ENCODE measurements at regions of chr4 and their contacts with region 1.

Region 1: GRCh38 chr4:142846729-142847596 is 862 bp upstream of the INPP4B start:
- DNase-seq: no peak
- ATAC-seq: peak; percentile 57
- H3K4me3 Mint-ChIP-seq: peak overlapping the region; percentile 76
- H3K27ac Mint-ChIP-seq: no peak overlapping the region
- H3K4me1 Mint-ChIP-seq: peaks cover 16% of the 10 kb centered on the region
- H3K27me3 Mint-ChIP-seq: peaks cover 42% of the 10 kb centered on the region
- CTCF ChIP-seq: no peak

Region 2: DNA sequence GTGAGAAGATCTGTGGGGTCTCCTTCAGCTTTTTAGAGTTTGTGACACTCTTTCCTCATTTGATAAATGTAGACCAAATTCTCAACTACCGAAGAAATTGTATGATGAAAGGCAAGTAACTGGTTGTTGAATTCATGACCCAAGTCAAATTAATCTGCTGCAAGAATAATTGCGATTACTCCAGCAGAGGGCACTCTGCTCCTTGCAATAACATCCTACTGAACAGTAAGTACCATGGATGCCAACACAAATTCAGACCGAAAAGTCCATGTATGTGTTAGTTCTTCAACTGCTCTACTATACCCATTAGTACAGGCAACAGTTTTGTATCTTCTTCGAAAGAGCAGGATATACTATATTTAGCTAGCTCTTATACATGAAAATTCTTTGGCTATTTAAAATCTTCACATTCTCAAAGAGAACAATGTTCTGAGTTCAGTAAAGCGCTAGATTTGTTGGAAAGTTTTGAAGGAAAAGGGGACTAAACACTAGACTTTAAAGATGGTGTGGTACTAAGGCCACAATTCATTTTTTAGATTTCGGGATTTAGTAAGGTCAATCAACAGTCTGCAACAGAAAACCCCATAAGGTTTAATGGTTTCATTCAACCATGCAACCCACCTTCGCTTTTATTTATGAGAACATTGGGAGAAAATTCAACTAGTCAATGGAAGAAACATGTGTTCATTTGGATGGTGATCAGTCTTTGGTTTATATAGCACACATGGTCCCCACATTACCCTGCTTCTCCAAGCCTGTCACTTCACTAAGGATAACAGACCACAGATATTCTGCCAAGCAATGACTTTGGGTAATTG is 1985.4 kb before region 1 on chr4:
- CTCF ChIA-PET with region 1: no interaction called
- POLR2A ChIA-PET with region 1: no interaction called
- intact Hi-C with region 1: loop called (anchors 5 kb)
- DNase-seq: no peak
- ATAC-seq: peak; percentile 67
- H3K4me3 Mint-ChIP-seq: no peak overlapping the region
- H3K27ac Mint-ChIP-seq: no peak overlapping the region
- H3K4me1 Mint-ChIP-seq: peaks cover 14% of the 10 kb centered on the region
- H3K27me3 Mint-ChIP-seq: peaks cover 2% of the 10 kb centered on the region
- CTCF ChIP-seq: no peak

Region 3: DNA sequence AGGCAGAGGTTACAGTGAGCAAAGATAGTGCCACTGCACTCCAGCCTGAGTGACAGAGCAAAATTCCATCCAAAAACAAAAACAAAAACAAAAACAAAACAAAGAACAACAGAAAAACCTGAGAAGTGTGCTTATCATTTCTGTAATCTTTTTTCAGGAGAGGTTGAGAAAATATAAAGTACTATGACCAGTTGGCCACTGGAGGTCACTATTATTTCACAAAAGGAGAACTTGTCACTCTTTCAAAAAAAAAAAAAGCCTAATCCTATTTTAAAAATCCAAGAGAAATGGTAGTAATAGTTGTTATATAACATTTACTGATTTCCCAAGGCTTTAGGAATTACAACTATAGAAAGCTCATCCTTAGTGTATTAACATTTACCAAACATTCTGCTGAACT is 1688.7 kb before region 1 on chr4:
- CTCF ChIA-PET with region 1: no interaction called
- POLR2A ChIA-PET with region 1: no interaction called
- intact Hi-C with region 1: loop called (anchors 2 kb)
- DNase-seq: no peak
- ATAC-seq: no peak
- H3K4me3 Mint-ChIP-seq: no peak overlapping the region
- H3K27ac Mint-ChIP-seq: no peak overlapping the region
- H3K4me1 Mint-ChIP-seq: no peaks in the 10 kb centered on the region
- H3K27me3 Mint-ChIP-seq: peaks cover 13% of the 10 kb centered on the region
- CTCF ChIP-seq: no peak

Region 4: GRCh38 chr4:141307241-141307689 is 1539.7 kb before region 1 on chr4:
- CTCF ChIA-PET with region 1: no interaction called
- POLR2A ChIA-PET with region 1: no interaction called
- intact Hi-C with region 1: loop called (anchors 1 kb)
- DNase-seq: peak; percentile 21
- ATAC-seq: peak; percentile 81
- H3K4me3 Mint-ChIP-seq: no peak overlapping the region
- H3K27ac Mint-ChIP-seq: no peak overlapping the region
- H3K4me1 Mint-ChIP-seq: peaks cover 10% of the 10 kb centered on the region
- H3K27me3 Mint-ChIP-seq: peaks cover 5% of the 10 kb centered on the region
- CTCF ChIP-seq: peak; percentile 30

Region 5: DNA sequence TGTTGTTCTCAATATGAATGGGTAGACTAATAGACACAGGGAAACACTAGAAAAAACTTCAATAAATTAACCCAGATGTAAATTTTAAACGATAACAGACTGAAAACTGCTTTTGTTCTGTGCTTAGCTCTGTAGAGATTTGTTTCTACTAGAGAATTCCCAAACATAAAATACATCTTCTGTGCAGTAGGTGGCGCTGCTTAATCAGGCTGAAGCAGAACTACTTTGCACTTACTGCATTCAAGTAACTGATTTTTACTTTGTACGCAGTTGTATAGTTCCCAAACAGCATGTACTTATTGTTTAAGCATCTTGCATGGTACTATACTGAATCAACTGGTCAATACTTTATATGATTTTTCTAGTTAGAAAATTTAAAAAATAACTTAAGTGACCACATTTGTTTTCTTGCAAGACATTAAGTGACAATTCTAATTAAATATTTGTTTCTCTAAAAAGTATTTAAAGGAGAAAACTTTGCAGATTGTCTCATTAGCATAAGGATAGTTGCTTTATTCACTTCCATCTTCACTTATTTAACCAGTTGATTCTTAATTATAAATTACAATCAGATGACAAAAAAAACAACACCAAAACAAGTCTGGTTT is 720.0 kb before region 1 on chr4:
- CTCF ChIA-PET with region 1: interaction called, 3 read pairs
- POLR2A ChIA-PET with region 1: no interaction called
- intact Hi-C with region 1: loop called (anchors 1 kb)
- DNase-seq: no peak
- ATAC-seq: no peak
- H3K4me3 Mint-ChIP-seq: no peak overlapping the region
- H3K27ac Mint-ChIP-seq: no peak overlapping the region
- H3K4me1 Mint-ChIP-seq: no peaks in the 10 kb centered on the region
- H3K27me3 Mint-ChIP-seq: no peaks in the 10 kb centered on the region
- CTCF ChIP-seq: no peak

Region 6: GRCh38 chr4:142282870-142283431 is 564.0 kb before region 1 on chr4:
- CTCF ChIA-PET with region 1: no interaction called
- POLR2A ChIA-PET with region 1: no interaction called
- intact Hi-C with region 1: loop called (anchors 2 kb)
- DNase-seq: no peak
- ATAC-seq: no peak
- H3K4me3 Mint-ChIP-seq: no peak overlapping the region
- H3K27ac Mint-ChIP-seq: no peak overlapping the region
- H3K4me1 Mint-ChIP-seq: no peaks in the 10 kb centered on the region
- H3K27me3 Mint-ChIP-seq: no peaks in the 10 kb centered on the region
- CTCF ChIP-seq: no peak

Region 7: DNA sequence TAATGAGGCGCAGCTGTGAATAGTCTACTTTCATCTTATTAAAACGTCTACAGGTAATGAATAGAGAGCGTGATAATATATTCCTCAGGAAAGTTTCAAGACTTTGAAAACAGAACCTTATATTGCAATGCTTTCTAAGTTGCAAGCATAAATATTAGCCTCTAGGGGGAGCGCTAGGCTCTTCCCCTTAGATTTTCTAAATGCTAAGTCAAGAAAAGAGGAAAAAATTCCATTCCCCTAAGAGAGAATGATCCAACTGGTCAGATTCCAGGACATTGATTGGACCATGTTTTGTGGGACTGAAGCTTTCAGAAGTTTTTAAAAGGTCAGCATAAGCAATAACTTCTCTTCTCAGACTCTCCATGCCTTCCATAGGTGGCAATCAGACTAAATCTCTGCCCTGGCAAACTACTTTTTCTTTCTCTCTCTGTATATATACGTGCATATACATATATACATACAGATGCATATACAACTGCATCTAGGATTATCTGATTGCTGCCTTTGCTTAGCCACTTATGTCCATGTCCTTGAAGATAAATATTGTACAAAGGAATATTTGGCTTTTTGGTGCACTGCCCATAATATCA is 493.7 kb before region 1 on chr4:
- CTCF ChIA-PET with region 1: no interaction called
- POLR2A ChIA-PET with region 1: no interaction called
- intact Hi-C with region 1: loop called (anchors 2 kb)
- DNase-seq: no peak
- ATAC-seq: no peak
- H3K4me3 Mint-ChIP-seq: no peak overlapping the region
- H3K27ac Mint-ChIP-seq: no peak overlapping the region
- H3K4me1 Mint-ChIP-seq: peaks cover 5% of the 10 kb centered on the region
- H3K27me3 Mint-ChIP-seq: no peaks in the 10 kb centered on the region
- CTCF ChIP-seq: no peak

Region 8: DNA sequence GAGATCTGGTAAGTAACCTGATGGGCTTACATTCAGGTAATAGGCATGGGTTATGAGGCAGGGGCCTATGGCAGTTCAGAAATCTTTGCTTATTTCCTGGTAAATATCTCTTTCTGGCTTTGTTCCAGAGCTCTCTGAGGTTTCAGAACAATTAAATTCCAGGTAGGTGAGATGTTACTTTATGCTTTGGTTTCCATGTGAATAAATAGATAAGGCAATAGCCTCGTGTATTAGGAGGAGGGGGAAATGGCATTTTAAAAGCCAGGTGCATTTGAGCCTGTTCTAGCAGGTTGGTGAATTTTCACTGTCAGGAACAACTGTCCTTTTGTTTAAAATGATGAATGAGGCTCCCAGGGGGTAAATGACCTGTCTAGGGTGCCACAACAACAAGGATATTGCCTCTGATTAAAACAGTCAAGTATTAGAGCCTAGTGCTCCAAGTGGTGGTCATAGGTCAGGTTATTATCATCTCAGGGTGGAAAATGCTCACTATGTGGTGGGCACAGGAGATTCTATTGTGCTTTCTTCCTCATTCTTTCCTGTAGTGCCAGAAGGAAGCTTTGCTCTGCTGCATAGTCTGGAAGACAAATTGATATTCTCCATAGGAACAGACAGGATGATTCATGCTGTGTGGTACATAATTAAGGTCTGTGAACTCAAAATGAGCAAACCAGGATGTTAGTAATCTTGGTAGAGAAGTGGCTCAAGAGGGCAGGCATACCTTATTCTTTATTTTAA is 297.1 kb before region 1 on chr4:
- CTCF ChIA-PET with region 1: no interaction called
- POLR2A ChIA-PET with region 1: no interaction called
- intact Hi-C with region 1: no loop called
- DNase-seq: no peak
- ATAC-seq: no peak
- H3K4me3 Mint-ChIP-seq: no peak overlapping the region
- H3K27ac Mint-ChIP-seq: no peak overlapping the region
- H3K4me1 Mint-ChIP-seq: no peaks in the 10 kb centered on the region
- H3K27me3 Mint-ChIP-seq: no peaks in the 10 kb centered on the region
- CTCF ChIP-seq: no peak

Region 9: DNA sequence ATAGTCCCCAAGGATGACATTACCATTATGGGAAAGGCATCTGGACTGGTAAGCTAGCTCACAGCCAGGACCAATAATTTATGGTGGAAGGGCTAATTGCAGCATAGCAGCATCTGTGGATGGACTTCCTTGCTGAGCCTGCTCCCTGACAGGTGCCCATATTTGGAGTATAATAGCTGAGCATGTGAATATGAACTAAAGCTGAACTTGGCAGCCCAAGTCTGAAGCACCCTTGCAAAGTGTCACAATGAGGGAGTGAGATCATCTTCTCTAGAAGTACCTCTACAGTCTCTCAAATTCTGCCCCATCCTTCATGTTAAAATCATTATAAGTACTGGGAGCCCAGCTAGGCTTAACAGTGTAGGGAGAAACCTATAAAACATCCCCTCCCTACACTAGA is 127.4 kb after region 1 on chr4:
- CTCF ChIA-PET with region 1: no interaction called
- POLR2A ChIA-PET with region 1: no interaction called
- intact Hi-C with region 1: no loop called
- DNase-seq: no peak
- ATAC-seq: no peak
- H3K4me3 Mint-ChIP-seq: no peak overlapping the region
- H3K27ac Mint-ChIP-seq: no peak overlapping the region
- H3K4me1 Mint-ChIP-seq: no peaks in the 10 kb centered on the region
- H3K27me3 Mint-ChIP-seq: no peaks in the 10 kb centered on the region
- CTCF ChIP-seq: no peak